ENCODE measurements at regions of chr11 and their contacts with region 1.

Region 1: DNA sequence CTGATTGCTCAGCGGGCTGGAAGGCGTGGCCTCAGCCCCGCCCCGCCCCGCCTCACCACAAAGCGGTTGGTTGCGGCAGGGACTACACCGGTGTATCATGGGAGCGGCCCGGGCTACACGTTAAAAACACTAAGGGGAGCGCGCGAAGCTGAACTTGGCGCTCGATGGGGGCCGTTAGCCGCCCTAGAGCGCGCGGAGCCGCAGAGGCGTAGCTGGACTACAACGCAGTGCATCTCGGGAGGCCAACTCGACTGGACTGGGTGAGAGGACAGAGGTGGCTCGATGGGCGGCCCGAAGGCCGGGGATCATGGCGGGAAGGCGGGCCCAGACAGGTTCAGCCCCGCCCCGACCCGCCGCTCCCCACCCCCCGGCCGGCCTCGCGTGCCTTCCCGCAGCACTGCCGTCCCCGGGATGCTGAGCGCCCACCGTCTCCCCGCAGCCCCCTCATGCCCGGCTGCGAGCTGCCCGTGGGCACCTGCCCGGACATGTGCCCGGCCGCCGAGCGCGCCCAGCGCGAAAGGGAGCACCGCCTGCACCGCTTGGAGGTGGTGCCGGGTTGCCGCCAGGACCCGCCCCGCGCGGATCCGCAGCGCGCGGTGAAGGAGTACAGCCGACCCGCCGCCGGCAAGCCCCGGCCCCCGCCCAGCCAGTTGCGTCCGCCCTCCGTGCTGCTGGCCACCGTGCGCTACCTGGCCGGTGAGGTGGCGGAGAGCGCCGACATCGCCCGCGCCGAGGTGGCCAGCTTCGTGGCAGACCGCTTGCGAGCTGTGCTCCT is at the start of gene SAC3D1:
- DNase-seq: peak; percentile 80 to 94
- H3K4me3 ChIP-seq: peak within 1 kb of the TSS; percentile 48 to 93 (median 80)
- H3K27ac ChIP-seq: peak within 1 kb of the TSS; percentile 85; the same call in 1 of the 2 replicates
- H3K4me1 ChIP-seq: no peaks in the 10 kb centered on the region; a peak in 2 of 7 replicates
- H3K27me3 ChIP-seq: no peaks in the 10 kb centered on the region
- CTCF ChIP-seq: no peak
- EP300 ChIP-seq: no peak
- POLR2A ChIP-seq: peak; percentile 58 to 60
- RAD21 ChIP-seq: no peak
- total RNA-seq, gene SAC3D1: 19.4 and 23.3 TPM in 2 replicates

Region 2: DNA sequence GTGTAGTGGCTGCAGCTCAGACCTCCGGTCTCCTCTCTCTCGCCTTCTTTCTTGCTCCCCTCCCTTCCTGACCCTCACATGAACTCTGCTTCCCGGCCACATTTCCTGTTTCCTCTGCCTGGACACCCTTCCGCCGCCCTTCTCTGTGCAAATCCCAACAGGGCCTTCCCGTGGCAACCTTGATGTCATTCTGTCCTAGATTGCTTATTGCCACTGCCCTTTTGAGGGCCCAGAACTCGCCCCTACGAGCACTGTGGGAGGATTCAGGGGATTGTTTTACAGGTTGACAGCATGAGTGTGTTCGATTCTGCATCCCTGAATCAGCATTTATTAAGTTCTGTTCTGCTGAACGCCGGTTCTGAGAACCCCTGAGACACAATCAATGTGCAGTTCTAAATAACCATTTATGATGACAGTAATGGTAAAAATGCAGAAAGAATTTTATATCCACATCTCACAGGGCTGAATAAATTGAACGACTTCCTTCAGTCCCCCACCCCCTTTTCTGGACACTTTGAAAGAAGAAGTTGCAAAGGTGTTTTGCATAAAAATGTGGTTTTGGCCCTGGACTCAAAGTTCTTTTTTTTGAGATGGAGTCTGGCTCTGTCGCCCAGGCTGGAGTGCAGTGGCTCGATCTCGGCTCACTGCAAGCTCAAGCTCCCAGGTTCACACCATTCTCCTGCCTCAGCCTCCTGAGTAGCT is 50.7 kb before region 1 on chr11:
- CTCF ChIA-PET with region 1: no interaction called
- POLR2A ChIA-PET with region 1: no interaction called
- DNase-seq: no peak
- H3K4me3 ChIP-seq: no peak overlapping the region
- H3K27ac ChIP-seq: no peak overlapping the region
- H3K4me1 ChIP-seq: no peaks in the 10 kb centered on the region
- H3K27me3 ChIP-seq: no peaks in the 10 kb centered on the region; a peak in 1 of 7 replicates
- CTCF ChIP-seq: no peak
- EP300 ChIP-seq: no peak
- POLR2A ChIP-seq: no peak
- RAD21 ChIP-seq: no peak

Region 3: DNA sequence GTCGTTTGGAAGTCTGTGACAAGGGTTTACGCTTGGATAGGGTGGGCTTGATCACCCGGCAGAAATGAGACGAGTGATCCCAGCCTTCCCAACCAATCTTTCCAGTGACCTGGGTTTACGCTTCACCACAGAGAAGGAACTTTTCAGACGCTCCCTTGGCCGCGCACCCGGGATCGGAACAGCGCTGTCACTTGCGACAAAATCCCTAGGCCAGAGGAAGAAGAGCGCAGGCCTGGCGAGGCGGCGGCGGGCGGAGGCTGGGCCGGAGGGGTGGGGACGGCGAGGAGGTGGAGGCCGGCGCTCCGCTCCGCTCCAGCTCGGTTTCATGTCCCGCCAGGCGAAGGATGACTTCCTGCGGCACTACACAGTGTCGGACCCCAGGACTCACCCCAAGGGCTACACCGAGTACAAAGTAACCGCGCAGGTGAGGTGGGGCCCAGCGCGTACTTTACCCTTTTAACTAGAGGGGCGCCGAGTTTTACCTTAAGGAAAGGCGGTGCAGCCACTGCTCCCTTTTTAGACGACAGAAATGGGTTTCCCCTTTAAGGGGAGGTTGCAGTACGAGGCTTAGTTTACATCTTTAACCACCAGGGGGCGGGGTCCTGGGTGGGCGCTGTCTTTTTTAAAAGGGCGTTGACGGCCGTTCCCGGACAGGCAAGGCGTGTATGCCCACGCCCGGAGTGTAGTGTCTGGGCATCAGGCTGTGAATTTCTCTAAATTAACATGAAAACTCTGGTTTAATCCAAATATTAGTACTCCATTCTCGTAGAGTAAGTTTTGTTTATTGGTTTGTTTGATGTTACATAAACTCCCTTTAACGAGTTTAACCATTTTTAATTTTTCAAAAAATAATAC is 13.6 kb before region 1 on chr11 and contains the start of gene SNX15:
- CTCF ChIA-PET with region 1: interaction called, 5 read pairs
- POLR2A ChIA-PET with region 1: interaction called, 10 read pairs
- DNase-seq: peak; percentile 68 to 95
- H3K4me3 ChIP-seq: peak within 1 kb of the TSS; percentile 31 to 65 (median 58)
- H3K27ac ChIP-seq: no peak within 1 kb of the TSS
- H3K4me1 ChIP-seq: peaks cover 0 to 4% (median 2%) of the 10 kb centered on the region in 4 experiments; a peak in 5 of 7 replicates
- H3K27me3 ChIP-seq: no peaks in the 10 kb centered on the region
- CTCF ChIP-seq: peak; percentile 13 to 49 (median 44)
- EP300 ChIP-seq: 0 out of 3 replicates have a peak, but pooled peaks of 1 of the 2 experiments have one; percentile 31
- POLR2A ChIP-seq: no peak
- RAD21 ChIP-seq: peak; percentile 16 to 28; a peak in 2 of 4 replicates
- total RNA-seq, gene SNX15: 18.3 and 19.6 TPM in 2 replicates

Region 4: DNA sequence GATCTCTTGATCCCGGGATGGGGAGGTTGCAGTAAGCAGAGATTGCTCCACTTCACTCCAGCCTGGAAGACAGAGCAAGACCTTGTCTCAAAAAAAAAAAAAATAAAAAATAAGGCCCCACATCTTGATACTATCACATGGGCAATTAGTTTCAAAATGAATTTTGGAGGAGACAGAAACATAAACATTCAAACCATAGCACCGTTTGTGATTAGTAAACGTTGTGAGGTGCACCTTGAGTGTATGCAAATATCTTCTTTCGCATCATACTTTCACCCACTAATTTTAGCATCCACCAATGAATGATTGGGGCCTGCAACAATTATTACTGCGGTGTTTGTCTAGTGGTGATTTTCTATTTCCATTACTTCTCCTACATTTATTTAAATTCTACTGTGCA is 118.0 kb after region 1 on chr11:
- CTCF ChIA-PET with region 1: no interaction called
- POLR2A ChIA-PET with region 1: no interaction called
- DNase-seq: no peak
- H3K4me3 ChIP-seq: no peak overlapping the region
- H3K27ac ChIP-seq: no peak overlapping the region
- H3K4me1 ChIP-seq: no peaks in the 10 kb centered on the region
- H3K27me3 ChIP-seq: no peaks in the 10 kb centered on the region
- CTCF ChIP-seq: no peak
- EP300 ChIP-seq: no peak
- POLR2A ChIP-seq: no peak
- RAD21 ChIP-seq: no peak

Measured in H1 (cell line).